CD4-positive, alpha-beta memory T cell (primary cell): ENCODE measurements at regions of chr18 and their contacts with region 1.

Region 1: GRCh38 chr18:45690975-45691815 is 32.8 kb upstream of the SLC14A1 start:
- DNase-seq: peak; percentile 67 to 72 (median 68)
- H3K4me3 ChIP-seq: no peak overlapping the region
- H3K4me3 Mint-ChIP-seq: peak overlapping the region in 2 of 8 donors; percentile 59 to 61
- H3K27ac ChIP-seq: no peak overlapping the region
- H3K27ac Mint-ChIP-seq: peak overlapping the region in 3 of 7 donors; percentile 19 to 82 (median 49)
- H3K4me1 ChIP-seq: peaks cover 53% of the 10 kb centered on the region
- H3K4me1 Mint-ChIP-seq: peaks cover 39 to 51% (median 43%) of the 10 kb centered on the region in 4 donors
- H3K27me3 ChIP-seq: no peaks in the 10 kb centered on the region
- H3K27me3 Mint-ChIP-seq: peaks cover 0 to 3% of the 10 kb centered on the region in 2 donors

Region 2: GRCh38 chr18:45008694-45009413 is 682.3 kb before region 1 on chr18:
- CTCF ChIA-PET with region 1: no interaction called
- POLR2A ChIA-PET with region 1: no interaction called
- intact Hi-C with region 1: no loop called
- DNase-seq: no peak
- H3K4me3 ChIP-seq: no peak overlapping the region
- H3K4me3 Mint-ChIP-seq: peak overlapping the region in 1 of 8 donors; percentile 3
- H3K27ac ChIP-seq: no peak overlapping the region
- H3K27ac Mint-ChIP-seq: peak overlapping the region in 1 of 7 donors; percentile 34
- H3K4me1 ChIP-seq: peaks cover 6% of the 10 kb centered on the region
- H3K4me1 Mint-ChIP-seq: peaks cover 5 to 13% (median 9%) of the 10 kb centered on the region in 4 donors
- H3K27me3 ChIP-seq: no peaks in the 10 kb centered on the region
- H3K27me3 Mint-ChIP-seq: peaks cover 0 to 2% of the 10 kb centered on the region in 2 donors

Region 3: GRCh38 chr18:45621061-45621511 is 70.1 kb before region 1 on chr18:
- CTCF ChIA-PET with region 1: interaction called, 3 read pairs
- POLR2A ChIA-PET with region 1: no interaction called
- intact Hi-C with region 1: loop called (anchors 1 kb)
- DNase-seq: peak in 4 of 5 donors; percentile 38 to 52 (median 46)
- H3K4me3 ChIP-seq: no peak overlapping the region
- H3K4me3 Mint-ChIP-seq: no peak overlapping the region
- H3K27ac ChIP-seq: no peak overlapping the region
- H3K27ac Mint-ChIP-seq: no peak overlapping the region
- H3K4me1 ChIP-seq: no peaks in the 10 kb centered on the region
- H3K4me1 Mint-ChIP-seq: no peaks in the 10 kb centered on the region
- H3K27me3 ChIP-seq: no peaks in the 10 kb centered on the region
- H3K27me3 Mint-ChIP-seq: peaks cover 4 to 7% of the 10 kb centered on the region in 2 donors

Region 4: GRCh38 chr18:45670281-45670962 is 20.8 kb before region 1 on chr18:
- CTCF ChIA-PET with region 1: interaction called, 304 read pairs
- POLR2A ChIA-PET with region 1: interaction called, 169 read pairs
- intact Hi-C with region 1: loop called (anchors 1 kb)
- DNase-seq: peak; percentile 39 to 80 (median 42)
- H3K4me3 ChIP-seq: no peak overlapping the region
- H3K4me3 Mint-ChIP-seq: peak overlapping the region in 7 of 8 donors; percentile 37 to 84 (median 66)
- H3K27ac ChIP-seq: peak overlapping the region; percentile 35
- H3K27ac Mint-ChIP-seq: peak overlapping the region; percentile 62 to 92 (median 84)
- H3K4me1 ChIP-seq: peaks cover 57% of the 10 kb centered on the region
- H3K4me1 Mint-ChIP-seq: peaks cover 35 to 60% (median 51%) of the 10 kb centered on the region in 4 donors
- H3K27me3 ChIP-seq: no peaks in the 10 kb centered on the region
- H3K27me3 Mint-ChIP-seq: no peaks in the 10 kb centered on the region

Region 5: GRCh38 chr18:45839414-45840395 is 148.5 kb after region 1 on chr18:
- CTCF ChIA-PET with region 1: interaction called, 6 read pairs
- POLR2A ChIA-PET with region 1: interaction called, 3 read pairs
- intact Hi-C with region 1: loop called (anchors 1 kb)
- DNase-seq: peak in 4 of 5 donors; percentile 26 to 43 (median 32)
- H3K4me3 ChIP-seq: no peak overlapping the region
- H3K4me3 Mint-ChIP-seq: peak overlapping the region in 7 of 8 donors; percentile 3 to 73 (median 46)
- H3K27ac ChIP-seq: no peak overlapping the region
- H3K27ac Mint-ChIP-seq: no peak overlapping the region
- H3K4me1 ChIP-seq: peaks cover 10% of the 10 kb centered on the region
- H3K4me1 Mint-ChIP-seq: peaks cover 9 to 21% (median 14%) of the 10 kb centered on the region in 4 donors
- H3K27me3 ChIP-seq: peaks cover 22% of the 10 kb centered on the region
- H3K27me3 Mint-ChIP-seq: peaks cover 30 to 32% of the 10 kb centered on the region in 2 donors

Region 6: DNA sequence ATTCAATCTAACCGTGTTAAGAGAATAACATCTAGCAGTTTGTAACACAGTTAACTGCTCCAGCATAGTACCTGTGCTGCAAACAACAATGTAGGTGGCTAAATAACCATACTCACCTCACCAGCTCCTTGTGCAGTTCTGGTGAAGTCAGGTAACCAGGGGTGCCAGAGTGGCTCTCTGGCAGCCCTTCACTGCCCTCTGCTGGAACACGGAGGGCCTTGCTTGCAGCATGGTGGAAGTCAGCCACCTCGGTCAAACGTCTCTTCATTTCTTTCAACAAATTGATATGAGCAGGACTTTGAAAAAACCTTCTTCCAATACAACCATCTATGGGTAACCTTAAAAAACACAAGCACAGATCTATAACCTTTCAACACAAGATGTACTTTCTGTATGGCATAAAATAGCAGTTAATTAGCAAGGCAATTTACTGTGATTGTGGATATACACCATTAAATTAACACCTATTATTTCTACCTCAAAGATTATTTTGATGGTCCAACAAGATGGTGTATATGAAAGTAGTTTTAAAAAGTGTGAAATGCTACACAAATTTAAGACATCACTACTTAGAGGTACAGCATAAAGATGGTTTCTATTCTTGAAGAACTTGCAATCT is 219.3 kb after region 1 on chr18:
- CTCF ChIA-PET with region 1: interaction called, 9 read pairs
- POLR2A ChIA-PET with region 1: no interaction called
- intact Hi-C with region 1: loop called (anchors 1 kb)
- DNase-seq: peak; percentile 45 to 61 (median 57)
- H3K4me3 ChIP-seq: no peak overlapping the region
- H3K4me3 Mint-ChIP-seq: no peak overlapping the region
- H3K27ac ChIP-seq: no peak overlapping the region
- H3K27ac Mint-ChIP-seq: peak overlapping the region in 2 of 7 donors; percentile 12 to 70
- H3K4me1 ChIP-seq: no peaks in the 10 kb centered on the region
- H3K4me1 Mint-ChIP-seq: peaks cover 0 to 6% (median 4%) of the 10 kb centered on the region in 4 donors
- H3K27me3 ChIP-seq: no peaks in the 10 kb centered on the region
- H3K27me3 Mint-ChIP-seq: no peaks in the 10 kb centered on the region

Region 7: DNA sequence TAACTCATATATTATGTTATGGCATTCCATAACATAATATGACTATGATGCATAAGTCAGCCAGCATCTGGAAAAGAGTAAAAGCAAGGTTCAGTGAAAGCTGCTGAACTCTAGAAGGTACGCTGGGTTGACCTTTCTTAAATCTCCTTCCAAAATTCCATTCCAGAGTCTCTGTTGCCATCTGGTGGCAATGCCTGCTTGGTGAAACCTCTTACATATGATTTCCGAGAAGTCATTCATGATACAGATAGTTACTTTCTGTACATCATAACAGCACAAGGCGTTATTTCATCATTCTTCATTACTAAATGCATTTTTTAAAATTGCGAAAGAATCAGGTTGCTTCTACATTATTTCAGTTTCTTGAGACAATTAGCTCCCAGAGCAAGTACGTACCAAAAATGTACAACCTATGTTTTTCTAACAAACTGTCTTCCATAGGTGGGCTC is 282.9 kb after region 1 on chr18:
- CTCF ChIA-PET with region 1: interaction called, 13 read pairs
- POLR2A ChIA-PET with region 1: no interaction called
- intact Hi-C with region 1: loop called (anchors 1 kb)
- DNase-seq: peak; percentile 60 to 80 (median 66)
- H3K4me3 ChIP-seq: no peak overlapping the region
- H3K4me3 Mint-ChIP-seq: peak overlapping the region in 3 of 8 donors; percentile 0 to 34 (median 1)
- H3K27ac ChIP-seq: no peak overlapping the region
- H3K27ac Mint-ChIP-seq: no peak overlapping the region
- H3K4me1 ChIP-seq: peaks cover 8% of the 10 kb centered on the region
- H3K4me1 Mint-ChIP-seq: peaks cover 8 to 18% (median 10%) of the 10 kb centered on the region in 4 donors
- H3K27me3 ChIP-seq: no peaks in the 10 kb centered on the region
- H3K27me3 Mint-ChIP-seq: no peaks in the 10 kb centered on the region